ENCODE measurements at regions of chr13 and their contacts with region 1.

Region 1: DNA sequence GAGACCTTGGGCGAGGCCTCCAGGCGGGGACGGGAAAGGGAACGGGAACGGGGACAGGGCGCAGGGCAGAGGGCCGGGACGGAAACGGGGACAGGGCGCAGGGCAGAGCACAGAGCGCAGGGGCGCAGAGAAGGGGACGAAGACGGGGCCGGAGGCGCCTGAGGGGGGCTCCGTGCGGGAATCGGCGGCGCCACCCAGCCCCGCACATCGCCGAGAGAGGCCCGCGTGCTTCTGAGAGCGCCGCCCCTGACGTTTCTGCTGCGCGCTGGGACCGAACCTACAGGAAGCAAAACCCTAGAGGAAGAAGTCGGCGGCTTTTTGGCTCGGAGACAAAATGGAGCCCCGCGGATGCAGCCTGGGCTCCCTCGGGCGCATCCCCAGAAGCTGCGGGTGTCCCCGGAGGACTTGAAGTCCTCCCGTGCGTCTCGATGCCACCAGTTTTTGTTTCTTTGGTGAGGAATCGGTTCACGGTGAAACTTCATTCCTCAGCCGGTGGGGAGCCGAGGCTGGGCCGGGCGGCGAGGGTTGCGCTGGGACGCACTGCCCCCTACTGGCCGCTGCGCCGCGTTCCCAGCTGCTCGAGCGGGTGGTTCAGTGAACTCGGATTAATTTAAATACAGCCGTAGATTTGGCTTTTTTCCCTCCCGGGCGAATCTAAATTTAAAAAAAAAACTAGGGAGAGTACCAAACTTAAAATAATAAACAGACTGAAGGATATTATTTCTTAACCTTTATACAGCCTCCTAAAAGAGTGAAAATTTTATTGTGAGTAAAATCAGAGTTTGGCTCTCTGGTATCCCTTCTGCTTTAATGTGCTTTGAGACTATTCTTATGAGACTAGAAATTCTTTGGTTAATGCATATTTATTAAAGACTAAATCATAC is 350.0 kb upstream of the ARGLU1 start:
- DNase-seq: peak; percentile 74 to 97 (median 84)

Region 2: DNA sequence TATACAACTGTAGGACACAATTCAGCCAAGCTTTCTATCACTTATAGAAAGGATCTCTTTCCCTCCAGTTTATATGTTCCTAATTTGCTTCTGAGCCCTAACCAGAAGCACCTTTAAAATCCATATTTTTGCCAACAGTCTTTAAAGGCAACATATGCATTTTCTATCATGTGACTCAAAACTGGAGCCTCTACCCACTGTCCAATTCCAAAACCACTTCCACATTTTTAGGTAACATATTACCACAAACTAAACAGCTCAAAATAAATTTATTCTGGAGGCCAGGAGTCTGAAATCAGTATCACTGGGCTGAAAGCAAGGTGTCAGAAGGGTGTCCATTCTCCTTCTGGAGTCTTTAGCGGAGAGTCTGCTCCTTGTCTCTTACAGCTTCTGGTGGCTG is 366.6 kb before region 1 on chr13:
- intact Hi-C with region 1: loop called (anchors 5 kb)
- DNase-seq: no peak

Region 3: GRCh38 chr13:106619688-106620555 is 298.0 kb before region 1 on chr13:
- intact Hi-C with region 1: loop called (anchors 5 kb)
- DNase-seq: peak in 2 of 10 donors; percentile 32 to 83

Region 4: GRCh38 chr13:106685143-106685542 is 232.8 kb before region 1 on chr13:
- intact Hi-C with region 1: loop called (anchors 5 kb)
- DNase-seq: no peak